Lower lobe of right lung (tissue), 2 donors: ENCODE measurements at regions of chr12 and their contacts with region 1.

Region 1: GRCh38 chr12:53287741-53288216 is 7.6 kb upstream of the PFDN5 start:
- DNase-seq: peak; percentile 72
- ATAC-seq: peak; percentile 82 to 87
- H3K4me3 ChIP-seq: no peak overlapping the region
- H3K27ac ChIP-seq: no peak overlapping the region
- H3K4me1 ChIP-seq: no peaks in the 10 kb centered on the region
- H3K27me3 ChIP-seq: no peaks in the 10 kb centered on the region
- CTCF ChIP-seq: peak; percentile 65

Region 2: DNA sequence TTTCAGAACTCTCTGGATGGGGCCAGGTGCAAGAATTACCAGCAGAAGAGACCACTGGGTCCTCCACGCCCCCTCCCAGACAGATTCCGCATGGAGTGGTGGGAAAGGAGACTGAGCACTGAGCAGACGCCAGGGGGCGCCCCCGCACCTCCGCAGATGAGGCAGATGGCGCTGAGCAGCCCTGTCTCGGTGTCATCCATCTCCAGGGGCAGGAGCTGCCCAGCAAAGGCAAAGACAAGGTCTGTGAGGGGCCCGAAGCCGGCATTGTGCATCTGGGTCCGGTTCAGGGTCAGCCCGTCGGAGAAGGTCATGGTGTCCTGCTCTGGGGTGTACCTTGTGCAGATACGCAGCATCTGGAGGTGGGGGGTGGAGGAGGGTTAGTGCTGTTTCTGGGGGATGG is 74.4 kb before region 1 on chr12:
- intact Hi-C with region 1: loop called (anchors 5 kb)
- DNase-seq: peak; percentile 90
- ATAC-seq: peak; percentile 77 to 79
- H3K4me3 ChIP-seq: no peak overlapping the region
- H3K27ac ChIP-seq: no peak overlapping the region
- H3K4me1 ChIP-seq: peaks cover 69% of the 10 kb centered on the region
- H3K27me3 ChIP-seq: no peaks in the 10 kb centered on the region
- CTCF ChIP-seq: peak; percentile 92